ENCODE measurements at regions of chrX and their contacts with region 1.

Region 1: GRCh38 chrX:101799387-101799786 is 132.4 kb downstream of the ZMAT1 start:
- DNase-seq: peak; percentile 85
- H3K4me3 ChIP-seq: peak overlapping the region; percentile 18 to 30
- H3K27ac ChIP-seq: no peak overlapping the region
- H3K4me1 ChIP-seq: no peaks in the 10 kb centered on the region
- H3K27me3 ChIP-seq: no peaks in the 10 kb centered on the region
- CTCF ChIP-seq: peak; percentile 58 to 65

Region 2: DNA sequence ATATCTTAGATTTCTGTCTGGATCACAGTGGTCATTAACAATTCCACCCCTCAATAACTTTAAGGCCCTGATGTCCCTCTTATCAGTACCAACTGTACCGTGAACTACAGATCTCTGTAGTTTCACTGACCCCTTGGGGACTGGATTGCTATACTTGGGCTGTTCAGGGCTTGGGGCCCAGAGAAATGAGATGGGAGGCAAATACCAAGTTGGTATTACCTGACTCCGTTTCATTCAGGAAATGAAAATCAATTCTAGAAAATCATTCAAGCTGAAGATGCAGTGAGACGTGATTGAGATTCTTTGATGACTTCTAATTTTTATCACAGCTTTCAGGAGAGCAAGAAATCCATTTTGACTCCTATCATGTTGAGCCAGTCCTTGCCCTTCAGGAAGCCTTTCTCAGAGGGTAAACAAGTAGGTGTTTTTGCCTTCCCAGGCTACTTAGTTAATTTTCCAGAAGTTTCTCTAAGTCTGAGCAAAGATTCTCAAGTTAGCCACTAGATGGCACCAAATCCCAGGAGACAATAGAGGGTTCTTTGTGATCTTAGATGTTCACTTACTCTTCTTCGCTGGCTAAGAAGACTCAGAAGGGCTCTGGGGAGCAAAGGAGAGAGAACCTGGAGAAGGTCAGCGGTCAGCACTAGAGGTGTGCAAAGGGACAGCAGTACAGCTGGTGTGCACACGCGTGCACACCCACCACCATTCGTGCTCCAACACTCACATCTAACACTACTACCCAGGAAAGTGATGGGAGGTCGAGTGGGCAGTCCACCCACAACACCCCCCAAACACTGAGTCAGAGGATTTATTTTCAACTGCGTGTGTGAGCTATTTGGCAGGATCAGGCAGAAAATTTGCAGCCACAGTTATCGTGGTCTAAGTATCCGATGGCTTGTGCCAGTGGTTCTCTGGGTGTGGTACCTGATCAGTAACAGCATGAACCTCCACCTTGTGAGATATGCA is 383.9 kb before region 1 on chrX:
- intact Hi-C with region 1: loop called (anchors 5 kb)
- DNase-seq: no peak
- H3K4me3 ChIP-seq: no peak overlapping the region
- H3K27ac ChIP-seq: peak overlapping the region; percentile 59 to 70
- H3K4me1 ChIP-seq: peaks cover 0 to 49% (median 6%) of the 10 kb centered on the region in 4 donors
- H3K27me3 ChIP-seq: no peaks in the 10 kb centered on the region
- CTCF ChIP-seq: peak; percentile 53 to 62

Region 3: DNA sequence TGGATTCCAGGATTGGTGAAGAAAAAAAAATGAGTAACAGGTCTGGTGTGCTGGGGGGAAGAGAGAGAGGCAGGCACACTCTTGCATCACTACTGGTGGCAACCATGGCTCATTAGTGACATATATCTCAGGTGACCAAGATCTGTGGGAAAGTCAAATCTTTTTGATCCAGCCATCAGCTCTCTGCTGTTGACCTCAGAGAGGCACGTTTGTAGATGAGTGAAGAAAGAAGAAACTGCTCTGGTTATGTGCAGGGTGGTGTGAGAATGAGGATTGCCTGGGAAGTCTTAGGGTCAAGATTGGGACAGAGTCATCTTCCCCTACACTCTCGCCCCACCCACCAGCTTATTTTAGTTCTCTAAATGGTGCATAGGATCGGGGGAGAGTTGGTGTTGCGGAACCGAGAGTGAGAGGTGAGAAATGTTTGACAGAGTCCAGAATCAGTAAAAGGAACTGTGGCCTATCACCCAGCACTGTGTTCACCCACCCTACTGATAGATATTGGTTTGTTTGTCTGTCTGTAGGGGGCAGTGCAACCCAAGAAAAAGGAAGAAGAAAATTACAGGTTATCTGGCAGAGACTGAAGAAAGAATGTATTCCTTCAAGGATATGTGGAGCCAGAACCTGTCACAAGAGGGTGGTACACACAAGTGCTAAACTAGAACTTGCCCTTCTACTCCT is 203.5 kb before region 1 on chrX:
- intact Hi-C with region 1: loop called (anchors 10 kb)
- DNase-seq: no peak
- H3K4me3 ChIP-seq: no peak overlapping the region
- H3K27ac ChIP-seq: no peak overlapping the region
- H3K4me1 ChIP-seq: no peaks in the 10 kb centered on the region
- H3K27me3 ChIP-seq: no peaks in the 10 kb centered on the region
- CTCF ChIP-seq: peak; percentile 45 to 70